Thyroid gland (tissue), 4 donors: ENCODE measurements at regions of chr16 and their contacts with region 1.

Region 1: DNA sequence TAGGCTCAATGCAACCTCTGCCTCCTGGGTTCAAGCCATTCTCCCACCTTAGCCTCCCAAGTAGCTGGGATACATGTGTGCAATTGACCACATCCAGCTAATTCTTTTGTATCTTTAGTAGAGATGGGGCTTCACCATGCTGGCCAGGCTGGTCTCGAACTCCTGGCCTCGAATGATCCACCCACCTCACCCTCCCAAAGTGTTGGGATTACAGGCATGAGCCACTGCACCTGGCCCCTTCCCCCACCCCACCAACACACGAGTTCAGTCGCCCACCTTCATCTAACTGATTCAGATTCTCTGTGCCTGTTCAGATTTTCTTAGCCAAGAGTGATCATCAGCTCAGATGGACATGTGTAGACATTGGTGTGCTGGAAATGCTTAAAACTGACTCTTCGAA is 25.0 kb upstream of the METTL9 start:
- DNase-seq: no peak
- H3K4me3 ChIP-seq: no peak overlapping the region
- H3K27ac ChIP-seq: no peak overlapping the region
- H3K4me1 ChIP-seq: no peaks in the 10 kb centered on the region
- H3K27me3 ChIP-seq: no peaks in the 10 kb centered on the region
- CTCF ChIP-seq: no peak
- POLR2A ChIP-seq: no peak

Region 2: DNA sequence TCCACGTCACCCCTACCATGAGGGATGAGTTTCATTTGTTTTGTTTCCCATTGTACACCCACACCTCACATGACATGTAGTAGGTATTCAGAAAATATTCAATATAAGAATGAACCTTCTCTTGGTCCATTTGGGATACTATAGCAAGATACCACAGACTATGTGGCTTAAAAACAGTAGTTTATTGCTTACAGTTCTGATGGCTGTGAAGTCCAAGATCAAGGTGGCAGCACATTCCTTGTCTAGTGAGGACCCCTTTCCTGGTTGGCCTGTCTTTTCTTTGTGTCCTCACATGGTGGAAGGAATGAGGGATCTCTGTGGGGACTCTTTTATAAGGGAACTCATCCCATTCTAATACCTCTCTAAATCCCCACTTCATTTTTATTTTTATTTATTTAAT is 260.0 kb before region 1 on chr16:
- intact Hi-C with region 1: no loop called
- DNase-seq: no peak
- H3K4me3 ChIP-seq: no peak overlapping the region
- H3K27ac ChIP-seq: no peak overlapping the region
- H3K4me1 ChIP-seq: no peaks in the 10 kb centered on the region
- H3K27me3 ChIP-seq: no peaks in the 10 kb centered on the region
- CTCF ChIP-seq: no peak
- POLR2A ChIP-seq: no peak

Region 3: GRCh38 chr16:21523411-21524067 is 50.8 kb before region 1 on chr16:
- intact Hi-C with region 1: loop called (anchors 10 kb)
- DNase-seq: no peak
- H3K4me3 ChIP-seq: no peak overlapping the region
- H3K27ac ChIP-seq: no peak overlapping the region
- H3K4me1 ChIP-seq: peaks cover 0 to 4% of the 10 kb centered on the region in 2 donors
- H3K27me3 ChIP-seq: no peaks in the 10 kb centered on the region
- CTCF ChIP-seq: no peak
- POLR2A ChIP-seq: no peak

Region 4: DNA sequence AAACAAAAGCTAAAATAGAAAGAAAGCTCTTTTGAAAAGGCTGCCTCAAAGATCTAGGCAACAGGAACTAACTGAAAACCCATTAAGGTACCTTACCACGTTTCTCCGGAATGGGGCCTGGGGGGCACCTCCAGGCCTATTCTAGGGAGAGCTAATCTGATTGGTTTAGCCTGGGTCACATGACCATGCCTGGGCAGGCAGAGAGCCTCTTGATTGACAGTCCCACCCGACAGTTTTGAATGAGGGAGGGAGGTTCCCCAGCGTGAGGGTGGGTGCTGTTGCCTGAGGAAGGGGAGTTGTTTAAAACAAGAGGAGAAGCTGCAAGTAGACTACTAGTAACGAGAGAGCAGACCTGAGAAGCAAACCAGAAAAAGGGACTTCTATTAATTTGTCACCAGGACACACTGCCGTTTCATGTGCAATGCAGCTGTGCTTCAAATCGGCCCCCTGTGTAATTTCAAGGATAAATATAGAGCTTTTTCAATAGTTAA is 1096.2 kb after region 1 on chr16:
- intact Hi-C with region 1: loop called (anchors 10 kb)
- DNase-seq: peak in 1 of 2 donors; percentile 10
- H3K4me3 ChIP-seq: no peak overlapping the region
- H3K27ac ChIP-seq: no peak overlapping the region
- H3K4me1 ChIP-seq: no peaks in the 10 kb centered on the region
- H3K27me3 ChIP-seq: no peaks in the 10 kb centered on the region
- CTCF ChIP-seq: no peak
- POLR2A ChIP-seq: no peak

Region 5: DNA sequence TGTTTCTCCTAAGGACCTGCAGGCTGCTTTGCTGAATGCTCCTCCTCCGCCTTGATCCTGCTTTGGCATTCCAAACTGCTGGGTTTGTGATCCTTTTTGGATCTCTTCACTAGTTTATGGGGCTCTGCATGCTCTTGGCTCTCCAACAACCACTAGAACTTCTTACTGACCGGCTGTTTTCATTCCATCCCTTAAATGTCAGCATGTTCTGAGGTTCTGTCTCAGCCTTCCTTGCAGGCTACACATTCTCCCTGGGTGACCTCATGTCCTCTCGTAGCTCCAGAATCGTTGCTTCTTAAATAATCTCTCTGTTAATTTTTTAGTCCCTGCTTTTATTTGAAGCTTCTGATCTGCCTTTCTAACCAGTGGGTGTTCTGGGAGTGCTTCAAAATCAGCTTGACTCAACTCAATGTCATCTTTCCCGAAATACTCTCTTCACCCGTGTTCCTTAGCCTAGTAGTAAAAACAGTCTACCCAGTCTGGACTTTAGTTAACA is 1120.6 kb after region 1 on chr16:
- intact Hi-C with region 1: loop called (anchors 2 kb)
- DNase-seq: peak in 1 of 2 donors; percentile 37
- H3K4me3 ChIP-seq: no peak overlapping the region
- H3K27ac ChIP-seq: peak overlapping the region in 2 of 3 donors; percentile 14 to 38
- H3K4me1 ChIP-seq: peaks cover 0 to 15% of the 10 kb centered on the region in 2 donors
- H3K27me3 ChIP-seq: no peaks in the 10 kb centered on the region
- CTCF ChIP-seq: no peak
- POLR2A ChIP-seq: no peak